Psoas muscle (tissue), 8 donors: ENCODE measurements at regions of chr11 and their contacts with region 1.

Region 1: DNA sequence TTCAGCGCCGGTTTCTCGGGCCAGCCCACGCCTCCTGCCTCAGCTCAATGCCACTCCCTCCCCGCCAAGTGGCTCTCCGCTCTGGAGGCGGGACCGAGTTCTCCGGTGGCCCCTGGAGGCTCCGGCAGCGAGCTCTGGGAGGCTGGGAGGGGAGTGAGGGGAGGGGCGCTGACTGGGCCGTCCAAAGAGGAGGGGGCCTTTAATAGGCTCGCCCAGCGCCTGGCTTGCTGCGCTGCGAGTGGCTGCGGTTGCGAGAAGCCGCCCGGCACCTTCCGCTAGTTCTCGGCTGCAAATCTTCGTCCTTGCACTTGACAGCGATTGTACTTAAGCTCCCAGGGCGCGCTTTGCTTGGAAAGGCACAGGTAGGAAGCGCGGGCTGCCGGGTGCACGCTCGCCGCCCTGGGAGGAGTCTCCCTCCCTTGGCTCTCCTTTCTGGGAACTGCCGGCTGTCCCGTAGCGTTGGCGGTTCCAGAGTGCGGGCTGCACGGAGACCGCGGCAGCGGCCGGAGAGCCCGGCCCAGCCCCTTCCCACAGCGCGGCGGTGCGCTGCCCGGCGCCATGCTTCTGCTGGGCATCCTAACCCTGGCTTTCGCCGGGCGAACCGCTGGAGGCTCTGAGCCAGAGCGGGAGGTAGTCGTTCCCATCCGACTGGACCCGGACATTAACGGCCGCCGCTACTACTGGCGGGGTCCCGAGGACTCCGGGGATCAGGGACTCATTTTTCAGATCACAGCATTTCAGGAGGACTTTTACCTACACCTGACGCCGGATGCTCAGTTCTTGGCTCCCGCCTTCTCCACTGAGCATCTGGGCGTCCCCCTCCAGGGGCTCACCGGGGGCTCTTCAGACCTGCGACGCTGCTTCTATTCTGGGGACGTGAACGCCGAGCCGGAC is at the start of gene ADAMTS15:
- DNase-seq: peak; percentile 81 to 92
- ATAC-seq: peak; percentile 74 to 84 (median 77)
- H3K4me3 ChIP-seq: peak within 1 kb of the TSS; percentile 70
- H3K27ac ChIP-seq: peak within 1 kb of the TSS; percentile 42
- H3K4me1 ChIP-seq: peaks cover 13% of the 10 kb centered on the region
- H3K27me3 ChIP-seq: peaks cover 0 to 13% (median 0%) of the 10 kb centered on the region in 3 donors
- CTCF ChIP-seq: no peak
- total RNA-seq, gene ADAMTS15: 1.5 to 2.2 (median 1.8) TPM

Region 2: GRCh38 chr11:130522284-130522961 is 73.8 kb after region 1 on chr11:
- intact Hi-C with region 1: loop called in 1 of 2 experiments (anchors 10 kb)
- DNase-seq: peak; percentile 91 to 96
- ATAC-seq: peak; percentile 98 to 99 (median 98)
- H3K4me3 ChIP-seq: no peak overlapping the region
- H3K27ac ChIP-seq: peak overlapping the region; percentile 84
- H3K4me1 ChIP-seq: peaks cover 23% of the 10 kb centered on the region
- H3K27me3 ChIP-seq: no peaks in the 10 kb centered on the region
- CTCF ChIP-seq: no peak

Region 3: DNA sequence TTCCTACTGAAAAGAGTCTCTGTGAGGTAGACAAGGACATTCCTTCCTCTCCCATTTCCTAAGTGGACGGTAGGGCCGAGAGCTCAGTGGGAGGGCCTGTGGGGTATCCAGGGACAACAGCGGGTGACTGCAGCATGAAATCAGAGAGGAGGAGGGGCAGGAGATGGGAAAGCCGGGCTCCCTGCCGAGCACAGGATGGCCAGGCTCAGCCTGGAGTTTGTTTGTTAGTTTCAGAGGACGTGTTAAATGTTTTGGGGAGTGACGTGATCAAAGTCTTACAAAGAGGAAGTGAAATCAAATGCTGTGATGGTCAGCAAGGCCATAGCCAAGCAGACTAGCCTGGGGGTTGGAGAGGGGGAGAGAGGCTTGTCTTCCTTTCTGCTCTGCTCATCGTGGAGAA is 152.5 kb after region 1 on chr11:
- intact Hi-C with region 1: loop called in 1 of 2 experiments (anchors 10 kb)
- DNase-seq: peak; percentile 66 to 89
- ATAC-seq: peak in 3 of 4 donors; percentile 56 to 84 (median 73)
- H3K4me3 ChIP-seq: no peak overlapping the region
- H3K27ac ChIP-seq: no peak overlapping the region
- H3K4me1 ChIP-seq: no peaks in the 10 kb centered on the region
- H3K27me3 ChIP-seq: no peaks in the 10 kb centered on the region
- CTCF ChIP-seq: no peak

Region 4: DNA sequence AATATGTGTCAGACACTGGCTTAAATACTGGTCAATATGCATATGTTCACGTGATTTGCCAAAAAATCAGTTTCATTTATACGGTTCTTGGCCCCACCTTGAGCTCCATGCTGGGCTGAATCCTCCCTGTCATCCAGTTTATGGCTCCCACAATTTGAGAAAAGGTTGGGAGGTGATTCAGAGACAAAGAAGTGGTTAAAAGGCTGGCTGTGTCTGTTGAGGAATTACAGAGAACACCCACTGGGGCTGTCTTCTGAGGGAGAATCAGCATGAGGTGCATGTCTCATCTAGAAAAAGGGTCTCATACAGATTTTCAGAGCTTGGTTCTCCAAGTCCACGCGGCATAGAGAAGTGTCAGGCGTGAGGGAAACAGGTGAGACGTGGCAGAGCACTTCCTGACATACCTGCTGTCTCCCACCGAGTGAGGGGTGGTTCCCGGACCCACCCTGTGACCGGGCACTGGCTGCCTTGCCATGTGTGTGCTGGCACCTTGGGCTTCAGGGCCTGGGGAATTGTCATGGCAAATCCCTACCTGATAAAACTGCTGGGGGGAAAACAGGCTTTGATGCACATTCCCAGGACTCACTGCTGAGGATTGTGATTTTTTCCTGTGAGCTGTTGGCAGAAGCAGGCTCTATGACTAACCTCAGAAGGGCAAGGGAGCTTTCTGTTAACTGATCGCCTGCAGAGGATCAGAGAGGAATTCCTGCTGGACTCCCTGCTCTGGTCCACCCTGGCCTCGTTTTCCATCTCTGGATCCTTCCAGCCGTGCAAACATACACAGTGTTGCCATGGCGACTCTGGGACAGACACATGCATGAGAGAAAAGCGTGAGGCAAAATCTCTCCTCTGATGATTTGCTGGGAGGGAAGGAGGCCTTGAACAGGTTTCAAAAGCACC is 223.4 kb after region 1 on chr11:
- intact Hi-C with region 1: loop called in 1 of 2 experiments (anchors 10 kb)
- DNase-seq: peak; percentile 54 to 73
- ATAC-seq: peak; percentile 59 to 80 (median 62)
- H3K4me3 ChIP-seq: no peak overlapping the region
- H3K27ac ChIP-seq: no peak overlapping the region
- H3K4me1 ChIP-seq: peaks cover 44% of the 10 kb centered on the region
- H3K27me3 ChIP-seq: no peaks in the 10 kb centered on the region
- CTCF ChIP-seq: no peak

Region 5: GRCh38 chr11:130827451-130828377 is 379.1 kb after region 1 on chr11:
- intact Hi-C with region 1: loop called in 1 of 2 experiments (anchors 5 kb)
- DNase-seq: peak; percentile 70 to 80
- ATAC-seq: peak; percentile 73 to 85 (median 80)
- H3K4me3 ChIP-seq: no peak overlapping the region
- H3K27ac ChIP-seq: no peak overlapping the region
- H3K4me1 ChIP-seq: peaks cover 47% of the 10 kb centered on the region
- H3K27me3 ChIP-seq: no peaks in the 10 kb centered on the region
- CTCF ChIP-seq: peak; percentile 30